HEK293T (cell line): ENCODE measurements at regions of chr6 and their contacts with region 1.

Region 1: GRCh38 chr6:7615611-7616383 is 25.8 kb downstream of the SNRNP48 start:
- DNase-seq: peak; percentile 62

Region 2: GRCh38 chr6:7630792-7631191 is 15.0 kb after region 1 on chr6:
- CTCF ChIA-PET with region 1: interaction called, 11 read pairs
- POLR2A ChIA-PET with region 1: no interaction called
- DNase-seq: peak; percentile 40

Region 3: GRCh38 chr6:7684843-7685242 is 69.0 kb after region 1 on chr6:
- CTCF ChIA-PET with region 1: no interaction called
- POLR2A ChIA-PET with region 1: no interaction called
- DNase-seq: no peak